ENCODE measurements at regions of chr1 and their contacts with region 1.

Region 1: GRCh38 chr1:48356901-48357300 is 115.1 kb downstream of the SPATA6 start:
- DNase-seq: no peak
- H3K4me3 ChIP-seq: no peak overlapping the region
- H3K27ac ChIP-seq: no peak overlapping the region
- H3K4me1 ChIP-seq: no peaks in the 10 kb centered on the region
- H3K27me3 ChIP-seq: no peaks in the 10 kb centered on the region
- CTCF ChIP-seq: peak in 3 of 6 experiments; percentile 29 to 40 (median 34)
- POLR2A ChIP-seq: no peak

Region 2: DNA sequence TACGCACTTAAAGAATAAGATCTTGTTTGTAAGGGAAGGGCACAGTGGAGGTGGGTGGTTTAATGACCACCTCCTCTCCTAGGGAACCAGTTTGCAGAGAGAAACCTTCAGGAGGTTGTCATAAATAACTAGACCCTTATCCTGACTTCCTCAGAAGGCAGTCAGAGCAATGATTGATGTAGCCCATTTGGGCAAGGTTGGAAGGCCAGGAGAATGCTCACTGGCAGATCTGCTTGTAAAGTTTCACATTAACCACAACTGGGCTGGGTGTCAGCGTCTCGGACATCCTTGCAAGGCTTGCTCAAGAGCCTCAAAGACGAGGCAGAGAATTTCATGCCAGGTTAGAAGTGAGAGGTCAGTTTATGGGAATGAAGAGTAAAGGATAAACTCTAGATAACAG is 272.1 kb before region 1 on chr1:
- intact Hi-C with region 1: no loop called
- DNase-seq: no peak
- H3K4me3 ChIP-seq: no peak overlapping the region
- H3K27ac ChIP-seq: no peak overlapping the region
- H3K4me1 ChIP-seq: peaks cover 0 to 18% of the 10 kb centered on the region in 2 donors
- H3K27me3 ChIP-seq: no peaks in the 10 kb centered on the region
- CTCF ChIP-seq: no peak
- POLR2A ChIP-seq: no peak

Region 3: DNA sequence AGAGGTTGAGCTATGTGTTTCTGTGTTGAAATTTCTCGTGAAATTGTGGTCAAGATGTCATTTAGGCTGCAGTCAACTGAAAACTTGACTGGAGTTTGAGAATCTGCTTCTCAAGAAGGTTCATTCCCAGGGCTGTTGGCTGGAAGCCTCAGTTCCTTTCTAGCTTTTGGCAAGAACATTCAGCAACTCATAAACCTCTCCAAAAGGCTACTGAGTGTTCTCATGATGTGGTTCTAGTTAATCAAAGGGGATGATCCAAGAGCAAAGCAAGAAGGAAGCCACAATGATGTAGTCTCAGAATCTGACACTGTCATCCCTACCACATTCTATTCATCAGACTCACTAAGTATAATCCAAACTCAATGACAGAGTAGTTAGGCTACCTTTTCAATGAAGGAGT is 48.5 kb after region 1 on chr1:
- intact Hi-C with region 1: no loop called
- DNase-seq: peak; percentile 38 to 45
- H3K4me3 ChIP-seq: no peak overlapping the region
- H3K27ac ChIP-seq: no peak overlapping the region
- H3K4me1 ChIP-seq: no peaks in the 10 kb centered on the region
- H3K27me3 ChIP-seq: no peaks in the 10 kb centered on the region
- CTCF ChIP-seq: no peak
- POLR2A ChIP-seq: no peak

Region 4: GRCh38 chr1:48498096-48498791 is 141.3 kb after region 1 on chr1:
- intact Hi-C with region 1: loop called (anchors 10 kb)
- DNase-seq: peak; percentile 77 to 86
- H3K4me3 ChIP-seq: no peak overlapping the region
- H3K27ac ChIP-seq: no peak overlapping the region
- H3K4me1 ChIP-seq: peaks cover 13 to 19% of the 10 kb centered on the region in 2 donors
- H3K27me3 ChIP-seq: no peaks in the 10 kb centered on the region
- CTCF ChIP-seq: peak; percentile 72 to 94 (median 82)
- POLR2A ChIP-seq: no peak

Measured in thyroid gland (tissue), 4 donors.